ENCODE measurements at regions of chr7 and their contacts with region 1.

Region 1: GRCh38 chr7:93902777-93903423 is 3.5 kb upstream of the GNGT1 start:
- DNase-seq: peak; percentile 83
- H3K4me3 ChIP-seq: no peak overlapping the region
- H3K27ac ChIP-seq: no peak overlapping the region
- H3K4me1 ChIP-seq: peaks cover 7% of the 10 kb centered on the region
- H3K27me3 ChIP-seq: peaks cover 3 to 12% of the 10 kb centered on the region in 2 experiments
- CTCF ChIP-seq: peak; percentile 75
- POLR2A ChIP-seq: no peak

Region 2: GRCh38 chr7:93715234-93715633 is 187.7 kb before region 1 on chr7:
- CTCF ChIA-PET with region 1: no interaction called
- POLR2A ChIA-PET with region 1: no interaction called
- dilution Hi-C with region 1: no loop called
- intact Hi-C with region 1: loop called (anchors 5 kb)
- DNase-seq: peak; percentile 58
- H3K4me3 ChIP-seq: no peak overlapping the region
- H3K27ac ChIP-seq: no peak overlapping the region
- H3K4me1 ChIP-seq: no peaks in the 10 kb centered on the region
- H3K27me3 ChIP-seq: peaks cover 15 to 26% of the 10 kb centered on the region in 2 experiments
- CTCF ChIP-seq: peak; percentile 71 to 72
- POLR2A ChIP-seq: no peak

Region 3: DNA sequence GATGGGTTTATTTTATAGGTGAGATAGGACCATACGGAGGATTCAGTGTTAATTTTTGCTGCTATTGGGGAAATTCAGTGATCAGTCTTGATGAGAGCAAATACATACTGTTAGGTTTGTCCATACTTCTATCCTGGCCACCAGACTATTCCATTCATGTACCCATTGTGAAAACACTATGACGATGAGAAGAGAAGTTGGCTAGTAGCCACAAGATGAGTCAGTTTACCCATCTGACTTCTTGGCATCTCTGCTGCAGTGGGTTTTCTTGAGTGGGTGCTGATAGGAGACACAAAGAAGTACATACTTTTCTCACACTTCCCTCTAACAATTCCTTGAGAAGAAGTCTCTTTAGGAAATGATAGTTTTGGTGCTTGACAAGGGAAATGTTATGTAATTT is 145.5 kb before region 1 on chr7:
- CTCF ChIA-PET with region 1: no interaction called
- POLR2A ChIA-PET with region 1: no interaction called
- dilution Hi-C with region 1: no loop called
- intact Hi-C with region 1: no loop called
- DNase-seq: no peak
- H3K4me3 ChIP-seq: no peak overlapping the region
- H3K27ac ChIP-seq: no peak overlapping the region
- H3K4me1 ChIP-seq: no peaks in the 10 kb centered on the region
- H3K27me3 ChIP-seq: no peaks in the 10 kb centered on the region
- CTCF ChIP-seq: no peak
- POLR2A ChIP-seq: no peak

Region 4: GRCh38 chr7:93890464-93891068 is 12.3 kb before region 1 on chr7 and contains the start of gene TFPI2:
- CTCF ChIA-PET with region 1: interaction called, 11 read pairs
- POLR2A ChIA-PET with region 1: no interaction called
- dilution Hi-C with region 1: no loop called
- intact Hi-C with region 1: no loop called
- DNase-seq: peak; percentile 62
- H3K4me3 ChIP-seq: peak within 1 kb of the TSS; percentile 63 to 97 (median 82)
- H3K27ac ChIP-seq: no peak within 1 kb of the TSS
- H3K4me1 ChIP-seq: peaks cover 23% of the 10 kb centered on the region
- H3K27me3 ChIP-seq: peaks cover 0 to 3% of the 10 kb centered on the region in 2 experiments
- CTCF ChIP-seq: no peak
- POLR2A ChIP-seq: no peak
- total RNA-seq, gene TFPI2: 33.1 and 65.9 TPM in 2 replicates

Region 5: GRCh38 chr7:94004024-94004951 is 101.4 kb after region 1 on chr7 and contains the start of gene BET1:
- CTCF ChIA-PET with region 1: interaction called, 4 read pairs
- POLR2A ChIA-PET with region 1: no interaction called
- dilution Hi-C with region 1: no loop called
- intact Hi-C with region 1: loop called (anchors 2 kb)
- DNase-seq: peak; percentile 96
- H3K4me3 ChIP-seq: peak within 1 kb of the TSS; percentile 85 to 95 (median 87)
- H3K27ac ChIP-seq: peak within 1 kb of the TSS; percentile 76
- H3K4me1 ChIP-seq: peaks cover 16% of the 10 kb centered on the region
- H3K27me3 ChIP-seq: peaks cover 10 to 23% of the 10 kb centered on the region in 2 experiments
- CTCF ChIP-seq: no peak
- POLR2A ChIP-seq: peak; percentile 66
- total RNA-seq, gene BET1: 23.9 and 28.4 TPM in 2 replicates

Region 6: DNA sequence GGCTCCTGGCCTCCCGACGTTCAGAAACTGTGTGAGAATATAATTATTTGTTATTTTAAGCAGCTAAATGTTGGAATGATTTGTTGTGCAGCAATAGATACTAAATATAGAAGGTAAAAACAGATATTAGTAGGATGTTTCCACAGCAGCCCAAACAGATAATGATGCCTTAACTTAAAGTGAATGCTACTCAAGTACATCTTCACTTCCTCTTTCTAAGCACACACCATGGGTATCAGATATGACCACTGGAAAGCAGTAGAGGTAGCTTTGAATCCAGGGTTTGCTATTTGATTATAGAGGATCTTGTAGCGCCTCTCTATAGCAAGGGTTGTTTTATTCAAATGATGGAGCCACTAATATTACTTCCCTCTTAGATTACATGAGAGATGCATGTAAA is 139.5 kb after region 1 on chr7:
- CTCF ChIA-PET with region 1: interaction called, 15 read pairs
- POLR2A ChIA-PET with region 1: no interaction called
- dilution Hi-C with region 1: no loop called
- intact Hi-C with region 1: no loop called
- DNase-seq: no peak
- H3K4me3 ChIP-seq: no peak overlapping the region
- H3K27ac ChIP-seq: no peak overlapping the region
- H3K4me1 ChIP-seq: peaks cover 22% of the 10 kb centered on the region
- H3K27me3 ChIP-seq: peaks cover 24 to 40% of the 10 kb centered on the region in 2 experiments
- CTCF ChIP-seq: no peak
- POLR2A ChIP-seq: no peak

Region 7: GRCh38 chr7:94223375-94224070 is 320.6 kb after region 1 on chr7:
- CTCF ChIA-PET with region 1: interaction called, 29 read pairs
- POLR2A ChIA-PET with region 1: no interaction called
- dilution Hi-C with region 1: no loop called
- intact Hi-C with region 1: loop called (anchors 1 kb)
- DNase-seq: peak; percentile 77
- H3K4me3 ChIP-seq: no peak overlapping the region
- H3K27ac ChIP-seq: no peak overlapping the region
- H3K4me1 ChIP-seq: peaks cover 8% of the 10 kb centered on the region
- H3K27me3 ChIP-seq: no peaks in the 10 kb centered on the region
- CTCF ChIP-seq: peak; percentile 55 to 67
- POLR2A ChIP-seq: no peak

Measured in endothelial cell of umbilical vein (primary cell).